Right cardiac atrium (tissue), 5 donors: ENCODE measurements at regions of chr2 and their contacts with region 1.

Region 1: DNA sequence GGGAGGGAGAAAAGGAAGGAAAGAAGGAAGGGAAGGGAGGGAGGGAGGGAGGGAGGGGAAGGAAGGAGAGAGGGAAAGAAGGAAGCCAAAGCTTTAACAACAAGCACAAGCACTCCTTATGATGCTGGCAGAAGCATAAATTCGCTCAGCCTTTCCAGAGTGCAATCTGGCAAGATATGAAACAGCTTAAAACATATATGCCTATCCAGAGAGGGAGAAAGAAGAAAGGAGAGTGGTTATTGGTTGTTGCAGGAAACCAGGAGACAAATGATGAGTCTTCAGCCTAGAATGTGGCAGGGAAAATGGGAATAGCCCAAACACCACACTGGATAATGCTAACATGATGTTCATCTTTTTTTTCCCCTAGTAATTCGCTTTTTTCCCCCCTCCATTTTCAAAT is 64.0 kb downstream of the STPG4 start:
- DNase-seq: no peak
- ATAC-seq: no peak
- H3K4me3 ChIP-seq: no peak overlapping the region
- H3K27ac ChIP-seq: no peak overlapping the region
- H3K4me1 ChIP-seq: peaks cover 11% of the 10 kb centered on the region
- H3K27me3 ChIP-seq: no peaks in the 10 kb centered on the region

Region 2: DNA sequence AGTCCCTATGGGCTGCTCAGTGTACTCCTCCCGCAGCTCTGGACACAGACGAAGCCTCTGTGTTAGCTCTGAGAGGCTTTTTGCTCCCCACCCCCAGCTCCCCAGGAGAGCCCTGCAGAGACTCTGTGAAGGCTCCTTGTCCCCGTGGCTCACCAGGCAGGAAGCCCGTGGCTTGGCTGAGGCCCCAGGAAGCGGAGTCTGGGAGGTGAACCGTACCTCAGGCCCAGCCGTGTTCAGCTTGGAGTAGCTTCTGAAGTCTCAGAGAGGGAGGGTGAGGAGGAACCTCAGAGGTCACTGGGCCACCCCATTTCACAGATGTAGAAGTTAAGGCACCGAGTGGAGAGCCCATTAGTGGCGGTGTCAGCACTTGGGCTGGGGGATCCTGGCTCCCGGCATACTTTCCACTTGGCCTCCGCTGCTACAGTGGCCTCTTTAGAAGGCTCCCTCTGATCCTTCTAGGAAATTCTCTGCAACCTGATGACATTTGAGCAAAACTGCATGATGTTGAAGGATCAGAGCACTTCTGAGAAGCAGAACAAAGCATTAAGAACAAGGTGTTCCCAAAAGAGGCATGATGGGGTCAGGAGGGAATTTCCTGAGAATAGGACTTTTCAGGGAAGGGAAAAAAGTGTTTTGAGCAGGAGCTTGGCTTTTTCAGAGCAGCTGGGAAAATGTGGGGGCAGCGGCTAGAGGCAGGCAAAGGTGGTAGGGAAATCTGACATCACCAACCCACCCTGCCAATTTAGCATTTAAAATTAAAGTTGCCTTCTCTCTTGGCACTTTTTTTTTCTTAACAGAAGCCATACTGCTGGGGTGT is 254.6 kb before region 1 on chr2:
- intact Hi-C with region 1: no loop called
- DNase-seq: peak in 1 of 3 donors; percentile 67
- ATAC-seq: peak; percentile 39 to 69
- H3K4me3 ChIP-seq: no peak overlapping the region
- H3K27ac ChIP-seq: no peak overlapping the region
- H3K4me1 ChIP-seq: peaks cover 8% of the 10 kb centered on the region
- H3K27me3 ChIP-seq: no peaks in the 10 kb centered on the region

Region 3: DNA sequence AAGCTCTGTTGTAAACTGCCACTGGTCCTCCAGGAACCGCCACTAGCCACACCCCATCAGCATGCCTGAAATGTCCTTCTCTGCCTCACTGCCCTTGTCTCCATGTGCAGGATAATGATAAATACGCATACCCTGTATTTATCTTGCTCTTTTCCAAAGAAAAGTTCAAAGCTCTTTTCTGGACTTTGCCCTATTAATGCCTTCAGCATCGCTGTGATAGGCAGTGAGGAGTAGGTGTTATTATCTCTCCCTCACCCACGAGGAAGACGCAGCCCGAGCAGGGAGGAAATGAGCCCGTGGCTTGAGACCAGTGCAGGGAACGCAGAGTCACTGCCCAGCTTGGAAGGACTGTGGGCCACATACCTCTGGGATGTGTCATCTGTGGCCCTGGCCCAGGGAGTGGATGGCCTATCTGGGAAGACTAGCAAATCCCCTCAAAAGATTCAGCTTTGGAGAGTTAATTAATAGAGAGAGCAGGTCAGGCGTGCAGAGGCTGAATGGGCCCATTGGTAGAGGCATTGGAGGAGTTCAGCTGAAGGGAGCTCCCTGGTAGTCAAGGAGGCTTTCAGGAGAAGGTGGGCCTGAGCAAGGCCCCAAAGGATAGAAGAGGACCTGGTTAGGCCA is 136.1 kb before region 1 on chr2:
- intact Hi-C with region 1: no loop called
- DNase-seq: peak; percentile 81 to 86 (median 84)
- ATAC-seq: peak; percentile 90 to 92
- H3K4me3 ChIP-seq: no peak overlapping the region
- H3K27ac ChIP-seq: peak overlapping the region; percentile 49
- H3K4me1 ChIP-seq: peaks cover 4% of the 10 kb centered on the region
- H3K27me3 ChIP-seq: no peaks in the 10 kb centered on the region

Region 4: GRCh38 chr2:47002480-47003381 is 88.4 kb before region 1 on chr2:
- intact Hi-C with region 1: no loop called
- DNase-seq: peak; percentile 70 to 89 (median 87)
- ATAC-seq: peak; percentile 59 to 62
- H3K4me3 ChIP-seq: no peak overlapping the region
- H3K27ac ChIP-seq: peak overlapping the region; percentile 61
- H3K4me1 ChIP-seq: peaks cover 17% of the 10 kb centered on the region
- H3K27me3 ChIP-seq: no peaks in the 10 kb centered on the region

Region 5: GRCh38 chr2:47165001-47165555 is 74.0 kb after region 1 on chr2:
- intact Hi-C with region 1: loop called in 1 of 4 experiments (anchors 5 kb)
- DNase-seq: no peak
- ATAC-seq: no peak
- H3K4me3 ChIP-seq: no peak overlapping the region
- H3K27ac ChIP-seq: no peak overlapping the region
- H3K4me1 ChIP-seq: no peaks in the 10 kb centered on the region
- H3K27me3 ChIP-seq: no peaks in the 10 kb centered on the region

Region 6: DNA sequence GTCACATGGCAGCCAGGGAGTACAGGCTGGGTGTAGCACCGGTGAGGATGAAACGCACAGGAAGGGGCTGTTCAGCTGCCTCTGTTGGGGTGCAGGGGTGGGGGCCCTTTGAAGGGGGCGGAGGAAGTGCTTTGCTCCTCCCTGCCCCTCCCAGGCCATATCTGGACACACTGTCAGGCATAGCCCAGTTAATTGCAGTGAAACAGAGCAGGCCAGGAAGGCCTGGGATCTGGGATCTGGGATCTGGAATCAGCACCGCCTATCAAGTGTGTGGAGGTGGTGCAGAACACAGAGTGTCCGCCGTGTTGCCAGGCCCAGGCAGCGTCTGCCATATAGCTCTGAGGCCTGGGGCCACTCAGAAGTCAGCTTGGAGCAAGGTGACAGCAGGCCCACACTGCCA is 192.5 kb after region 1 on chr2:
- intact Hi-C with region 1: no loop called
- DNase-seq: no peak
- ATAC-seq: no peak
- H3K4me3 ChIP-seq: no peak overlapping the region
- H3K27ac ChIP-seq: no peak overlapping the region
- H3K4me1 ChIP-seq: no peaks in the 10 kb centered on the region
- H3K27me3 ChIP-seq: no peaks in the 10 kb centered on the region